ENCODE measurements at regions of chr15 and their contacts with region 1.

Region 1: GRCh38 chr15:78540141-78540928 is at the start of gene PSMA4:
- DNase-seq: peak; percentile 90
- H3K4me3 ChIP-seq: peak within 1 kb of the TSS; percentile 92
- H3K27ac ChIP-seq: peak within 1 kb of the TSS; percentile 96 to 97
- H3K4me1 ChIP-seq: no peaks in the 10 kb centered on the region
- H3K27me3 ChIP-seq: no peaks in the 10 kb centered on the region
- CTCF ChIP-seq: peak in 2 of 4 experiments; percentile 21 to 24
- POLR2A ChIP-seq: peak; percentile 71
- total RNA-seq, gene PSMA4: 62.8 to 174 TPM

Region 2: GRCh38 chr15:77921664-77922063 is 618.7 kb before region 1 on chr15:
- intact Hi-C with region 1: no loop called
- DNase-seq: no peak
- H3K4me3 ChIP-seq: no peak overlapping the region
- H3K27ac ChIP-seq: no peak overlapping the region
- H3K4me1 ChIP-seq: no peaks in the 10 kb centered on the region
- H3K27me3 ChIP-seq: no peaks in the 10 kb centered on the region
- CTCF ChIP-seq: no peak
- POLR2A ChIP-seq: no peak

Region 3: DNA sequence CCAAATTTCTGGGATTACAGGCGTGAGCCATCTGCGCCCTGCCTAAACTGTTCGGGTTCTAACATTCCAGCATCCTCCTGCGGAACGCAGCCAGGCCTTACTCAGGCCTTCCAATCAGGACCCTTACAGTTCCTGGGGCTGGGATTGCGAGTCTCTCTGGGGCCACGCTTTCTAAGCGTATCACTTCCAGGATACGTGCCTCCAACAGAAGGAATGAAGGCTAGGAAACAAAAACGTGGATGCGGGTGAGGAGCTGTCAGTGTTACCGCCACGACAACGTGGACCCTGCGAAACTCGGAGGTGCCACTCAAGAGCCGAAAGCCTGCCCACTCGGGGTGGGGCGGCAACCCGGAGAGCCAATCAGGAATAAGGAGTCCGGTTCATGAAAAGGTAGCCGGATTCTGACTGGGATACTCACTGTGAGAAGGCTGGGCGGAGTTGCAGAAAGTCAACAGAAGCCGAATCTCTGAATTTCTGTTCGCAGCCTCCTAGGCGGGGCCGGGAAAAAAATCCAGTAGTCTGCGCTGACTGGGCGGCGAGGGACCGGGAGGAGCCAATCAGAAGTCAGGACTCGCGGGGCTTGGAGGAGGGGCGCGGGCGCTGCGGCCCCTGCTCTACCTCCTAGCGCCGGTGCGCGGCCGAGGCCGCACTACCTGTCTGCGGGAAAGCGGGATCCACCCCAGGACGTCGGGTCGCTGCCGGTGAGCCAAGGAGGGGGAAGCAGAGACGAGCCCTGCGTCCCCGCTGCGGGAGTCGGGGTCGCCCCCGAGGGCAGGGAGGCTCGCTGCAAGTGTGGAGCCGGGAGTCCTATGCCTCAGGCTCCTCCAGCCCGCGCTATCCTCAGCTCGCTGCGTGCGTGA is 33.1 kb before region 1 on chr15 and contains the start of gene HYKK:
- intact Hi-C with region 1: loop called (anchors 5 kb)
- DNase-seq: peak; percentile 96
- H3K4me3 ChIP-seq: peak within 1 kb of the TSS; percentile 58 to 84
- H3K27ac ChIP-seq: peak within 1 kb of the TSS; percentile 73 to 77
- H3K4me1 ChIP-seq: no peaks in the 10 kb centered on the region
- H3K27me3 ChIP-seq: no peaks in the 10 kb centered on the region
- CTCF ChIP-seq: peak in 2 of 4 experiments; percentile 47 to 48
- POLR2A ChIP-seq: peak; percentile 50
- total RNA-seq, gene HYKK: 6.2 to 11.2 TPM